HEK293T (cell line): ENCODE measurements at regions of chr1 and their contacts with region 1.

Region 1: GRCh38 chr1:17236779-17237560 is 11.9 kb upstream of the PADI3 start:
- DNase-seq: peak; percentile 84

Region 2: GRCh38 chr1:17125756-17126237 is 111.2 kb before region 1 on chr1:
- CTCF ChIA-PET with region 1: interaction called, 31 read pairs
- POLR2A ChIA-PET with region 1: interaction called, 5 read pairs
- DNase-seq: peak; percentile 90

Region 3: DNA sequence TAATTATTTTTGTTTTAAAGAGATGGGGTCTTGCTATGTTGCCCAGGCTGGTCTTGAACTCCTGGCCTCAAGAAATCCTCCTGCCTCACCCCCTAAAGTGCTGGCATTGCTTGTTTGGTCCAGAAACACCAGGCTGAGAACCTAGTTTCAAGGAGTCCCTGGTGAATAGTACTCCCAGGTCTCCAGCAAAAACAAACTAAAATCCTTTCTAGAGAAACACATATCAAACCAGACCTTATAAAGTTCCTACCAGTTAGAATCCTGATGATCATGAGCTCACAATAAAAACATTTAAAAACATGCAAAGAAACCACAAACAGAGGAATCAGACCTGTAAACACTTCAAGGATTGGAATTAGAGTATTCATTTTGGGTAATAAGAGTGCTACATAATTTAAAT is 66.4 kb before region 1 on chr1:
- CTCF ChIA-PET with region 1: no interaction called
- POLR2A ChIA-PET with region 1: no interaction called
- DNase-seq: no peak